ENCODE measurements at regions of chr6 and their contacts with region 1.

Region 1: DNA sequence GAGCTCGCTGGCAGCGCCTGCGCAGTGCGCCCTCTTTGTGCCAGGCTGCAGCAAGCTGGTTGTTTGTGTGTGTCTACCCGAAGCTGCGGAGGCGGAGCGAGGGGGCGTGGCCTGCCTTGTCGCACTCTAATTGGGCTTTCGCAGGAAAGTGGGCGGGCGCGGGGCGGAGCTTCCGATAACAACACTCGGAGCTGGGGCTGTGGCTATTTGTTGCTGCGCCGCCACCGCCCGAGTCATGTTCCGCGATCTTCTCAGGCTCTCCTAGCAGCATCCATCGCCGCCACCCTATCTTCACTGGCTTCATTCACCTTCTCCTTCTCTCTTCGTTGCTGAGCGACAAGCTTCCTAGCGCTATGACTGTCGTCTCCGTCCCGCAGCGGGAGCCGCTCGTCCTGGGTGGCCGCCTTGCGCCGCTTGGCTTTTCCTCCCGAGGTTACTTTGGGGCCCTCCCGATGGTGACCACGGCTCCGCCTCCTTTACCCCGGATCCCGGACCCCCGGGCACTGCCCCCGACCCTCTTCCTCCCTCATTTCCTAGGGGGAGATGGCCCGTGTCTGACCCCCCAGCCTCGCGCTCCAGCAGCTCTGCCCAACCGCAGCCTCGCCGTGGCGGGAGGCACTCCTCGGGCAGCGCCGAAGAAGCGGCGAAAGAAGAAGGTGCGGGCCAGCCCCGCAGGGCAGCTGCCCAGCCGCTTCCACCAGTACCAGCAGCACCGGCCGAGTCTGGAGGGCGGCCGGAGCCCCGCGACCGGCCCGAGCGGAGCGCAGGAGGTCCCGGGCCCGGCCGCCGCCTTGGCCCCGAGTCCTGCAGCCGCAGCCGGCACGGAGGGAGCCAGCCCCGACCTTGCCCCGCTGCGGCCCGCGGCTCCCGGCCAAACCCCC is at the start of gene PNRC1:
- DNase-seq: peak; percentile 100
- ATAC-seq: peak; percentile 88 to 95 (median 92)
- H3K4me3 ChIP-seq: peak within 1 kb of the TSS; percentile 79 to 99 (median 97)
- H3K27ac ChIP-seq: peak within 1 kb of the TSS; percentile 99 to 100 (median 100)
- H3K4me1 ChIP-seq: peaks cover 3 to 41% (median 31%) of the 10 kb centered on the region in 9 donors
- H3K27me3 ChIP-seq: no peaks in the 10 kb centered on the region
- CTCF ChIP-seq: peak in 2 of 9 donors; percentile 12 to 15
- total RNA-seq, gene PNRC1: 137 to 270 (median 228) TPM

Region 2: GRCh38 chr6:89022798-89023197 is 58.0 kb before region 1 on chr6:
- intact Hi-C with region 1: loop called in 3 of 10 experiments (anchors 2 to 5 kb)
- DNase-seq: no peak
- ATAC-seq: peak in 5 of 8 donors; percentile 8 to 46 (median 26)
- H3K4me3 ChIP-seq: no peak overlapping the region
- H3K27ac ChIP-seq: peak overlapping the region in 6 of 10 donors; percentile 3 to 84 (median 70)
- H3K4me1 ChIP-seq: peaks cover 3 to 34% (median 30%) of the 10 kb centered on the region in 9 donors
- H3K27me3 ChIP-seq: no peaks in the 10 kb centered on the region
- CTCF ChIP-seq: no peak

Region 3: GRCh38 chr6:89035252-89036106 is 45.3 kb before region 1 on chr6:
- intact Hi-C with region 1: loop called in 8 of 10 experiments (anchors 1 to 5 kb)
- DNase-seq: peak; percentile 70 to 77
- ATAC-seq: peak; percentile 89 to 96 (median 93)
- H3K4me3 ChIP-seq: peak overlapping the region in 7 of 10 donors; percentile 6 to 23 (median 19)
- H3K27ac ChIP-seq: peak overlapping the region; percentile 65 to 95 (median 84)
- H3K4me1 ChIP-seq: peaks cover 4 to 54% (median 34%) of the 10 kb centered on the region in 9 donors
- H3K27me3 ChIP-seq: no peaks in the 10 kb centered on the region
- CTCF ChIP-seq: no peak

Region 4: DNA sequence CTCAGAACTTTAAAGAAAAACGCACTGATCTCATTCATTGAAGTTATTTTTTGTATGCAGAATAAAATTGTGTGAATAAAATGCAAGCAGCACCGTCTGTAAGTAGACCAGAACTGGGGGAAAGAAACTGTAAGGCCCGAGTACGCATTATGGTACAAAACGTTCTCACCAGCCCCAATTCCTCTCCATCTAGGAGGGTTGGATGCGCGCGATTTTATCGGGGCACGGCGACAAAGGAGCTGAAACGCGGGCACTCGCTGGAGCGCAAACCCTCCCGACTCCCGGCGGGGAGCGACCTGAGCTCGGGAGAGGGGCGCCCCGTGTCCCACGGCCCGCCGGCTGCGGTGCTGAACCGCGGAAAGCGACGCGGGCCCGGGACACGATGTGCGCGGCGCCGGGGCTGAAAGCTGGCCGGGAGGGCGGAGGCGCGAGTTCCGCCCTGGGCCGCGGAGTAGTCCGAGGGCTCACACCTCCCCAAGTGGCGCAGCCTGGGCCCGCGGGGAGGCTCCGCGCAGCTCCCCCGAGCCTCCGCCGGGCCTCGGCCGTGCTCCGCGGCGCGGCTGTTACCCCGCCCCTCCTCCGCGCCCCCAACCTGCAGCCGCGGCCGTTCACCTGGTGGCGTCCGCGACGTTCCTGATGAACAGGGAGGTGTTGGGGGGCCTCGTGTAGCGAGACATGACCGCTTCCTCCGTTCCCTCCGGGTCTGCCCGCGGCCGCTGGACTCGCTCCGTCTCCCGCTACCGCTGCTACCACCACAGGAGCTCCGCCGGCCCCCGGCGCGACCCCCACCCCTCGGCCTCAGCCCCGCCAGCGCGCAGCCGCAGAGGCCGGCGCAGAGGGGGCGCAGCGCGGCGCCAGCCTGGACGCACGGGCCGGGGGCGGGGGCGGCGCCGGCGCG is 36.7 kb after region 1 on chr6 and contains the start of gene SRSF12:
- intact Hi-C with region 1: loop called in 1 of 10 experiments (anchors 5 kb)
- DNase-seq: peak; percentile 13 to 36
- ATAC-seq: peak; percentile 80 to 90 (median 86)
- H3K4me3 ChIP-seq: peak within 1 kb of the TSS; percentile 53 to 96 (median 73)
- H3K27ac ChIP-seq: peak within 1 kb of the TSS in 3 of 10 donors; percentile 1 to 70 (median 46)
- H3K4me1 ChIP-seq: peaks cover 0 to 14% (median 7%) of the 10 kb centered on the region in 9 donors
- H3K27me3 ChIP-seq: no peaks in the 10 kb centered on the region
- CTCF ChIP-seq: peak in 1 of 9 donors; percentile 21
- total RNA-seq, gene SRSF12: 0.06 to 0.47 (median 0.17) TPM in 8 of 10 donors, not detected in the others

Region 5: GRCh38 chr6:89145787-89146646 is 65.2 kb after region 1 on chr6 and contains the start of gene PM20D2:
- intact Hi-C with region 1: loop called in 2 of 10 experiments (anchors 2 to 5 kb)
- DNase-seq: peak; percentile 52 to 69
- ATAC-seq: peak; percentile 92 to 98 (median 94)
- H3K4me3 ChIP-seq: peak within 1 kb of the TSS; percentile 53 to 91 (median 84)
- H3K27ac ChIP-seq: peak within 1 kb of the TSS; percentile 68 to 94 (median 88)
- H3K4me1 ChIP-seq: peaks cover 0 to 26% (median 16%) of the 10 kb centered on the region in 9 donors
- H3K27me3 ChIP-seq: no peaks in the 10 kb centered on the region
- CTCF ChIP-seq: no peak
- total RNA-seq, gene PM20D2: 6.0 to 14.3 (median 8.4) TPM

Region 6: GRCh38 chr6:89239338-89239737 is 158.6 kb after region 1 on chr6:
- intact Hi-C with region 1: no loop called
- DNase-seq: no peak
- ATAC-seq: no peak
- H3K4me3 ChIP-seq: no peak overlapping the region
- H3K27ac ChIP-seq: no peak overlapping the region
- H3K4me1 ChIP-seq: peaks cover 0 to 8% (median 0%) of the 10 kb centered on the region in 9 donors
- H3K27me3 ChIP-seq: peaks cover 0 to 8% (median 0%) of the 10 kb centered on the region in 7 donors
- CTCF ChIP-seq: peak in 6 of 9 donors; percentile 10 to 43 (median 23)

Region 7: GRCh38 chr6:89352278-89353117 is 271.7 kb after region 1 on chr6 and contains the start of gene UBE2J1:
- intact Hi-C with region 1: loop called in 5 of 10 experiments (anchors 5 to 10 kb)
- DNase-seq: peak; percentile 95 to 97
- ATAC-seq: peak; percentile 94 to 98 (median 96)
- H3K4me3 ChIP-seq: peak within 1 kb of the TSS; percentile 66 to 95 (median 83)
- H3K27ac ChIP-seq: peak within 1 kb of the TSS; percentile 93 to 100 (median 98)
- H3K4me1 ChIP-seq: peaks cover 16 to 61% (median 49%) of the 10 kb centered on the region in 9 donors
- H3K27me3 ChIP-seq: no peaks in the 10 kb centered on the region
- CTCF ChIP-seq: peak in 1 of 9 donors; percentile 5
- total RNA-seq, gene UBE2J1: 9.9 to 23.9 (median 14.1) TPM